AG04450 (cell line): ENCODE measurements at regions of chr17 and their contacts with region 1.

Region 1: DNA sequence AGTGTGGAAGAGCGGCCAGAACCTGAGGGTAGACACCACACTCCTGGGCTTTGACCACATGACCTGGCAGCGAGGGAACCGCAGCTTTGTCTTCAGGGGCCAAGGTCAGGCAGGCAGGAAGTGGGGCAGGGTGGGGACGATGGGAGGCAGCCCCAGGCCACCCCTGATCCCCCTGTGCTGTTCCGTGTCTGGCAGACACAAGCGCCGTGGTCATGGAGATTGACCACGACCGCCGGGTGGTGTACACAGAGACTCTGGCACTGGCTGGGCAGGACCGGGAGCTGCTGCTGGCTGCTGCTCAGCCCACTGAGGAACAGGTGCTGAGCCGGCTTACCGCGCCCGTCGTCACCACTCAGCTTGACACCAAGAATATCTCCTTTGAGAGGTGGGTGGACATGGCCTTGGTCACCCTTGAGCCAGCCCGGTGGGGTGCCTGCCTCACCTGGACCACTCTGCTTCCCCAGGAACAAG is 13.8 kb downstream of the CORO6 start:
- DNase-seq: no peak
- H3K4me3 ChIP-seq: no peak overlapping the region
- H3K27ac ChIP-seq: no peak overlapping the region
- H3K27me3 ChIP-seq: no peaks in the 10 kb centered on the region
- CTCF ChIP-seq: no peak

Region 2: DNA sequence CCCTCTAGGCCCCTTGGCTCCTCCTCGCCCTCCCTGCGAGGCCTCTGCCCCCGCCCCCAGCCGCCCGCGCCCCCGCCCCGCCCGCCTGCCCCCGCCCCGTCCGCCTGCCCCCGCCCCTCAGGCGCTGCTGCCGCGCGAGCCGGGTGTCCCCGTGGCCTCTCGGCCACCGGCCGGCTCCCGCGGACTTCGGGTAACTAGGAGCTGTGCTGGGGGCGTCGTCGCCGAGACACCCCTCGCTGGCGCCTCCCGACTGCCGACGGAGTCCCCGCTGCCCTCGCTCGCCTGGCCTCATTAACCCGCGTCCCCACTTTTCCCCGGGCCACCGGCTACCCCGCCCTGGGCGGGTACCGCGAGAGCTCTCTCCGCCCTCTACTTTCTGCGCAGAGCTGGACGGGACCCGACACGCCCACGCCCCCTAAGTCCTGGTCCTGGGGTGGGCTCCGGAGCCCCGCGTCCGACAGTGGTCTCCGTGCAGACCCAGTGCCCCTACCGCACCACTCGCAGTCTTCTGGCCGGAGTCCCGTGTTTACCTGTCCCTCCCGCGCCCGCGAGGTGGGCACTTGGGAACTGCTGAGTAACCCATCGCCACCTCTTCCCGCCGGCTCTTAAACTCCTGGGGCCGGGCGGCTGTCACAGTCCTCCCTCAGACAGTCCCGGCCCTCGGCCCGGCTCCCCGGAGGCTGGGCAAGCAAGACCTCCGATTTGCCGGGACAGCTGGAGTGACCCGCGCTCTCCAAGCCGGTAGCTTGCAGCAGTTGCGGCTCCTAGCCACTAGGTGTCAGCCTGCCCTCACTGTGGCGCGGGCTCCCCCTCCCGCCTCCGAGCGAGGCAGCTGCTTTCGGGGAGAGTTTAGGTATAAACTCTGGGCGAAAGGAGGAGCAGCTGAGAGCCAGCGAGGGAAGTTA is 882.4 kb before region 1 on chr17 and contains the start of gene TLCD1:
- CTCF ChIA-PET with region 1: no interaction called
- POLR2A ChIA-PET with region 1: no interaction called
- DNase-seq: peak; percentile 84
- H3K4me3 ChIP-seq: peak within 1 kb of the TSS; percentile 71
- H3K27ac ChIP-seq: peak within 1 kb of the TSS; percentile 77
- H3K27me3 ChIP-seq: no peaks in the 10 kb centered on the region
- CTCF ChIP-seq: peak; percentile 98
- polyA plus RNA-seq, gene TLCD1: 11.8 and 13.1 TPM in 2 replicates

Region 3: GRCh38 chr17:29597361-29598172 is 11.4 kb before region 1 on chr17:
- CTCF ChIA-PET with region 1: no interaction called
- POLR2A ChIA-PET with region 1: interaction called, 10 read pairs
- DNase-seq: no peak
- H3K4me3 ChIP-seq: no peak overlapping the region
- H3K27ac ChIP-seq: no peak overlapping the region
- H3K27me3 ChIP-seq: no peaks in the 10 kb centered on the region
- CTCF ChIP-seq: no peak